AG04450 (cell line): ENCODE measurements at regions of chr10 and their contacts with region 1.

Region 1: DNA sequence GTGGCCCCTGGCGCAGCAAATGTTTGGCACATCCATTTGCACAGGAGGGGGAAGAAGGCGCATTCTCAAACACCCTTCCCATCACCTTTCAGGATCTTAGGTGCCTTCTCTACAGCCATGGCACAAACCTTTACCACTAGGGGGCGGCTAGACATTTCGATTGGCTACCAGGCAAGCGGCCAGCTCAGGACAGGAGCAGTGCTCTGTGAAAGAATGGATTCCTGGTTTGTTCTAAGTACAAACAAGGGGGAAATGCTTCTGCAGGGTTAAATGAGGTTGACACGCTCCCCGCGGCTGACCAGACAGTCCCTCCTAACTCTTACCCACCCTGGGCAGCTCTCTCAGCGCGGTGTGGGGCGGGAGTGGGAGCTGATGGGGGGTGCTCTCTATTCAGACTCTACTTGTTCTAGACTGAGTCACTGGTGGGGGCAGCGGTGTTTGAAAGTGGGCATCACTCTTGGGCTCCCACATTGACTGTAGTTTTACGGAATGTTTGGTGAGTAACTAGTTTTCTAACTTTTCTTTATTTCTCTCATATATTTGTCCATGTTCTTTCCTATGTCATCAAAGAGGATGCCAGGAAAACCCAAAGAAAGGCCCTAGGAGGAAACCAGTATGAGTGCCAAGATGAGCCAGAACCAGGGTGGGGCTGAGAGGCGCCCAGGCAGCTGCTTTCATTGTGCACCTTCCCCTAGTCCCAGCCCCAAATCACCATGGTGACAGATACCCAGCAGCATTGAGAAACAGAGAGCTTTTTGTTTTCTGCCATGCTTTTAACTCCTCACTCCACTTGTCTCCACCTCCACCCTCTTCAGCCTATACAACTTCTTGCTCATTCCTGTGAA is 61.4 kb upstream of the GPR158 start:
- DNase-seq: peak; percentile 10
- H3K4me3 ChIP-seq: no peak overlapping the region
- H3K27ac ChIP-seq: no peak overlapping the region
- H3K27me3 ChIP-seq: no peaks in the 10 kb centered on the region
- CTCF ChIP-seq: peak; percentile 83

Region 2: DNA sequence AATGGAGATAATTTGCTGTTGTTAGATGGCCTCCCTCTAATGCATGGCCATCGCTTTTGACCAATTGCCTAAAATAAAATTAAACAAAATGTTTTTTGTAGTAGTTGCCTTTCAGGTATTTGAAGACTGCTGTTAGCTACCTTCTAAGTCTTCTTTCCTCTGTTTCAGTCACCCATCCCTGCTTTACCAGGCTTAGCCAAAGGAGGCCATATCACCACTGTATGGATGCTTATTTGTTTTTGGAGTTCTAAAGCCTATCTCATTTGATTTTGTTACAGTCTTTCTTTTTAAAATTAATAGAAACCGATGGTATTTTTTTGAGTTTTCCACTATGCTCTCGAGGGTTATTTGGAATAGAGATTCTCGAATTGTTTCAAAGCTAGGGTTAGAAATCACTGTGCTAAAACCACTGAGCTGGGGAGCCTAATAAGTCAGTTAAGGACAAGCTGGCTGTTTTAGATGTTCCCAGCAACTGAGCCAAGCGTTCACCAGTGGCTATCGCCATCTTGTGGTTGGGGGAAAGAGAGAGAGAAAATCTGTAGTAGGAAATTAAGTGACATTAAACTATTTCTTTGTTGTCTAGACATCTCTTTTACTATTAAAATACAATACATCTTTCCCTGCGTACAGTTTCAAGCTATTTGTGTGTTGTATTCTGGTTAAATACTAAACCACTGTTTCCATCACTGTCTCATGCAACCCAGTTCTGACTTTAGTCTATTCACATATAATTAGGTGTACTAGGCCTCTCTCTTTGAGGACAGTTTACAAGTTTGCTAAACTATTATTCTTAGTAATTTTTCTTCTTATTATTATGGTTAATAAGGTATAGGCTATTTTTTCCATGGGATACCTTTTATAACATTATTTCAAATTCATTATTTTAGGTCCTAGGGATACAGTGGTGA is 113.6 kb after region 1 on chr10:
- CTCF ChIA-PET with region 1: interaction called, 10 read pairs
- POLR2A ChIA-PET with region 1: no interaction called
- DNase-seq: no peak
- H3K4me3 ChIP-seq: no peak overlapping the region
- H3K27ac ChIP-seq: no peak overlapping the region
- H3K27me3 ChIP-seq: no peaks in the 10 kb centered on the region
- CTCF ChIP-seq: peak; percentile 66